ENCODE measurements at regions of chrX and their contacts with region 1.

Region 1: GRCh38 chrX:120769576-120770341 is 105.9 kb downstream of the CT47B1 start:
- DNase-seq: peak; percentile 44

Region 2: DNA sequence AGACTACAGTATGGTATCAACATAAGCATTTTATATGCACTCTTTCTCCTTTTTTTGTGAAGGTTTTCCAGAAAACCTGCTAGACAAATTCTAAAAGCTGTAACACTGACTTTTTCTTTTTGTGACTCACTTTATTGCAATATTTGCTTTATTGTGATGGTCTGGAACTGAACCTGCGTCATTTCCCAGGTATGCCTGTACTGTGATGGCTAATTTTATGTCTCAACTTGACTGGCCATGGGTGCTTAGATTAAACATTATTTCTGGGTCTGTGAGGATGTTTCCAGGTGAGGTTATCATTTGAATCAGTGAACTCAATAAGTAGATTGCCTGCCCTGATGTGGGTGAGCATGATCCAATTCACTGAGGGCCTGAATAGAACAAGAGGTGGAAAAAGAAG is 265.2 kb before region 1 on chrX:
- in situ Hi-C with region 1: no loop called
- DNase-seq: no peak

Region 3: DNA sequence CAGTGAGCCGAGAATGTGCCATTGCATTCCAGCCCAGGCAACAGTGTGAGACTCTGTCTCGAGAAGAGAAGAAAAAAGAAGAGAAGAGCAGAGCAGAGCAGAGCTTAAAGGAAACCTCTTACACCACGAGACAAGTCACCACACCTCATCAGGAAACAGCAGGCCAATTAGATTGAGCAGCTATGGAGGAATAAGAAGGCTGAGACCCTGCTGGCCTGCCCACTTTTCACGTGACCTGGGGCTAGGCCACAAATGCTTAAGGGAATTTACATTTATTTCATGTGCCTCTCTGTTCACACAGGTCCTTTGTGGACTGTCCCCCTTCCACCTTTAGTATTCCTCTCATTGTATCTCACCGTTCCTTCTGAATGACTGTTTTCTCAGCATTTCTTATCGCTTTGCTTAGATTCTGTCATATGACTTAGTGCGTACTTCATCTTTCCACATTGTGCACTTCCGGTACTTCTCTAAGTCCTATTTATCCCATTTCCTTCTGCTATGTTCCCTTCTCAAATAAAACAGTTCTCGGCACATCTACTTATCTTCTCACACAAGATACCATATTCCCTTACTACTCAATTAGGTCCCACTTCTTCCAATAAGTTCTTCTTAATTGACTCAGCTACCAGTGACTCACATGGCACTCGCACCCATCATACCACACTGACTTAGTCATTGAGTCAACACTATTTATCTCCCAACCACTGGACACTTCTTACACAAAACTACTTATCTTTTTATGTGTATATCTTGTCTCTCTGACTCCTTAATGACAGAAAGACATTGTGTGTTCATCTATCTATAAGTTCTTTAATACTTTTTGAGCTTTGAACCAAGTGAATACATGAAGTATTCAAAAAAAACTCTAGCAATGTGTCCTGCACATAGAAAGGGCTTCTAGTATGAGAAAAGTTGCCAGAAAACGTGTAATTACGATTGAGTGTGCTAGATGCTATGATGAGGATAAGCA is 220.0 kb before region 1 on chrX:
- in situ Hi-C with region 1: loop called (anchors 25 kb)
- DNase-seq: no peak

Region 4: DNA sequence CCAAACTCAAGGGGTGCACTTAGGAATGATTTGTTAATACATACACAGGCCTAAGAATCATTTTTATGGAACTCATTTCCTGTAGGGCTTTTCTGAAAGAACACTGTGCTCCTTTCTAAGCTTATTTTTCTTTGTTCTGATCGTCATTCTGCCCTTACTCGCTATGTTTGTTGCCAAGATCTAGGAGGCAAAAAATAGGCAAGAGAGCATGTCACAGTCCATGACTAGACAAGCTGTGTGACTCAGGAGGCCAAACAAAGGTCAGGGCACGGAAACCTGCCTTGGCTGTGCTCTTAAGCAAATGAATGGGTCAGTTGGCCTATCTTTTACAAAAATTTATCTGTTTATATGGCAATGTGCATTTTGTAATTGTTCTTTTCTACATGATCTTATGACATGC is 97.4 kb before region 1 on chrX:
- in situ Hi-C with region 1: no loop called
- DNase-seq: no peak

Region 5: GRCh38 chrX:120726294-120726693 is 43.5 kb before region 1 on chrX:
- in situ Hi-C with region 1: no loop called
- DNase-seq: peak; percentile 95